ENCODE measurements at regions of chr15 and their contacts with region 1.

Region 1: DNA sequence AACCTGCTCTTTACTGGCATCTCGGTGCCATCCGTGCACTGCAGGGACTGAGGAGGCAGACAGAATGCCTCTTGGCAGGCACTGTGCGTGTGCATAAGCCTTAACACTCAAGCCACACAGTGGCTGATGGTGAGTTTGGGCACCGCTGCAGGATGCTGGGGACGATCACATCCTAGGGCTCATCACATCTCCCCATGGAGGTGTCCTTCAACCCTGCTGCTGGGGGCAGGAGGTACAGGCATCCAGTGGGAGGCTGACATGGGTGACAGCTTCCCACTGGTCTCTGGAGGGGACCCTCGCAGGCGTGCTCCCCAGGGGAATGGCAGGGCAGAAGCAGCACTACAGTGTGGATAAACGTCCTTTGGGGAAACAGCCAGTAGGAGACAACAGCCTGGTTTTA is 190.9 kb downstream of the ADAMTS17 start:
- DNase-seq: no peak
- H3K4me3 ChIP-seq: no peak overlapping the region
- H3K27ac ChIP-seq: no peak overlapping the region
- H3K4me1 ChIP-seq: no peaks in the 10 kb centered on the region
- H3K27me3 ChIP-seq: no peaks in the 10 kb centered on the region
- CTCF ChIP-seq: no peak
- POLR2A ChIP-seq: no peak

Region 2: DNA sequence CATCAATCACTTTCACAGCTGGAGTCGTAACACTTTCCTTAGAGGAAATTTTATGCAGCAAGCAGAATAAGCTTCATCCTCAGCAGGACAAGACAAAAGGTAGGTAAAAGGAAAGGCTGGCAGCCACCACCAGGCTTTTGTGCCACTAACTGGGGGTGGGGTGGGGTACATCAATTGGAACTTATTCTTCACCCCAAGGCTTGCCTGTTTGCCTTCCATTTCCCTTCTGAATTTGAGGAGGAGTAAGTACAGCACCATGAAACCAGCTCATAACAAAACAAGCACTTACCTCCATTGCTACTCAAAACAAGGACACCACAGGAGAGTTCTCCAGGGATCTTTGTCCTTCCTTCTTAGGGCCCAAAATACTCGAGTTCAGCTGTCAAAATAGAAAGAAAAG is 1893.6 kb before region 1 on chr15:
- intact Hi-C with region 1: no loop called
- DNase-seq: no peak
- H3K4me3 ChIP-seq: no peak overlapping the region
- H3K27ac ChIP-seq: no peak overlapping the region
- H3K4me1 ChIP-seq: no peaks in the 10 kb centered on the region
- H3K27me3 ChIP-seq: no peaks in the 10 kb centered on the region
- CTCF ChIP-seq: no peak
- POLR2A ChIP-seq: no peak

Region 3: GRCh38 chr15:99921101-99921500 is 229.8 kb before region 1 on chr15:
- intact Hi-C with region 1: no loop called
- DNase-seq: no peak
- H3K4me3 ChIP-seq: no peak overlapping the region
- H3K27ac ChIP-seq: no peak overlapping the region
- H3K4me1 ChIP-seq: no peaks in the 10 kb centered on the region
- H3K27me3 ChIP-seq: peaks cover 0 to 6% of the 10 kb centered on the region in 2 donors
- CTCF ChIP-seq: no peak
- POLR2A ChIP-seq: no peak

Region 4: DNA sequence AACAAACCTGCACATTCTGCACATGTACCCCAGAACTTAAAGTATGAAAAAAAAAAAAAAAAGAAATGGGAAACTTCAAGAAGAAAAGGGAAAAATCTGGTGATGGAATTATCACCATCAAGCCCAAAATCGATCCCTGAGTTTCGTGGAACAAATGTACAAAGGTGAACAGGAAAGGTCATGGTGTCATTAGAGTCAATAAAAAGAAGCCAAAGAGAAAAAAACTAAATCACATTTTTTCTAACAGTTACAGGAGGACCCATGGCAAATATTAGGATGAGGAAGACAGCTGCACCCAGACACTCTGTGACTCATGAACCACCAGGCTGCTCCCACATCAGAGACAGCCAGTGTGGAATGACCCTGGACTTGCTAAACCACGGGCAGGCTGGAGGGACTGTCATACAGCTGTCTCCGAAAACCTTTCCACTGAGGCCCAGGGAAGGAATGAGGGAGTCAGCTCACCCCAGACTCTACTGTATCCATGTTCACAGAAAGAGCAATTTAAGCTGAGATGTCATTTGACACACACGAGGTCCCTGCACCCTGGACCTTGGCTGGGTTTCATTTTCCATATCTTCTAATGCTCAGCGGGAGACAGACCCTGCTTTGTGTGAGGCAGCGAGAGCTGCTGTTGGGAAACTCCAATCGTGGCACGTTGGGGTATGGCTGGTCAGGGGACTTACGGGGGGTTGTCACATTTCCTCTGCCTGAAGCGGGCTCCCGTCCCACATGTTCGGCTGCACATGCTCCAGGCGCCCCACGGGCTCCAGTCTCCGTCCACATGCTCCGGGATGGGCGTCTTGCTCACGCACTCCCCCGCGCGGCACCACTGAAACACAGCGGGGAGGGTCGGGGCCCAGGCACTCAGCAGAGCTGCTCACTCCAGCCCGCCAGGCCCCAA is 19.3 kb before region 1 on chr15:
- intact Hi-C with region 1: loop called (anchors 1 kb)
- DNase-seq: no peak
- H3K4me3 ChIP-seq: peak overlapping the region in 1 of 3 donors; percentile 13
- H3K27ac ChIP-seq: no peak overlapping the region
- H3K4me1 ChIP-seq: no peaks in the 10 kb centered on the region
- H3K27me3 ChIP-seq: no peaks in the 10 kb centered on the region
- CTCF ChIP-seq: no peak
- POLR2A ChIP-seq: no peak

Region 5: DNA sequence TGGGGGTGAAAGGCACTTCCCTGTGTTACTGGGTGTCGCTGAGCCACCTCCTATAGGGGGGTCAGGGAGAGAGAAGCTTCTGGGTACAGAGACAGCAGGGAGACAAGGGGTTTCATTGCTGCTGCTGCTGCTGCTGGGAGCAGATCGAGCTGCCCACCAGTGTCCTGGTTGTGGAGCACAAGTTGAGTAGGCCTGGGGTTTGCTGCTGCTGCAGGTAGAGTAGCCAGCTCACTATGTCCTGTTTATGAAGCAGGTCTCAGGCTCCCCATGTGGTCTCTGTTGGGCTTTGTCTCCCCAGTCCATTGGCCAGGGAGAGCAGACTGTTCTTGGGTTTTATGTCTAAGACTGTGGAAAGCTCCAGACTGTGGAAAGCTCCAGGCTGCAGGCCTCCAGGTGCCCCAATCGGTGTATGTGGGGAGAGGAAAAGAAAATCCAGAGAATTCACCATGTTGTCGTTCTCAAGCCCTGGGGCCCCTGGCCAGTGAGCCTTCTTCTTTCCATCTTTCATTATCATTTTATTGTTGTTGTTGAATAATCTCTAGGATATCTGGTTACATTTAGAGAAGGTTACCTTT is 33.1 kb after region 1 on chr15:
- intact Hi-C with region 1: loop called (anchors 1 kb)
- DNase-seq: no peak
- H3K4me3 ChIP-seq: no peak overlapping the region
- H3K27ac ChIP-seq: no peak overlapping the region
- H3K4me1 ChIP-seq: no peaks in the 10 kb centered on the region
- H3K27me3 ChIP-seq: no peaks in the 10 kb centered on the region
- CTCF ChIP-seq: no peak
- POLR2A ChIP-seq: no peak

Region 6: GRCh38 chr15:100301910-100302431 is 151.1 kb after region 1 on chr15:
- intact Hi-C with region 1: no loop called
- DNase-seq: no peak
- H3K4me3 ChIP-seq: no peak overlapping the region
- H3K27ac ChIP-seq: no peak overlapping the region
- H3K4me1 ChIP-seq: no peaks in the 10 kb centered on the region
- H3K27me3 ChIP-seq: no peaks in the 10 kb centered on the region
- CTCF ChIP-seq: no peak
- POLR2A ChIP-seq: no peak

Measured in breast epithelium (tissue), 4 donors.